ENCODE measurements at regions of chr6 and their contacts with region 1.

Region 1: DNA sequence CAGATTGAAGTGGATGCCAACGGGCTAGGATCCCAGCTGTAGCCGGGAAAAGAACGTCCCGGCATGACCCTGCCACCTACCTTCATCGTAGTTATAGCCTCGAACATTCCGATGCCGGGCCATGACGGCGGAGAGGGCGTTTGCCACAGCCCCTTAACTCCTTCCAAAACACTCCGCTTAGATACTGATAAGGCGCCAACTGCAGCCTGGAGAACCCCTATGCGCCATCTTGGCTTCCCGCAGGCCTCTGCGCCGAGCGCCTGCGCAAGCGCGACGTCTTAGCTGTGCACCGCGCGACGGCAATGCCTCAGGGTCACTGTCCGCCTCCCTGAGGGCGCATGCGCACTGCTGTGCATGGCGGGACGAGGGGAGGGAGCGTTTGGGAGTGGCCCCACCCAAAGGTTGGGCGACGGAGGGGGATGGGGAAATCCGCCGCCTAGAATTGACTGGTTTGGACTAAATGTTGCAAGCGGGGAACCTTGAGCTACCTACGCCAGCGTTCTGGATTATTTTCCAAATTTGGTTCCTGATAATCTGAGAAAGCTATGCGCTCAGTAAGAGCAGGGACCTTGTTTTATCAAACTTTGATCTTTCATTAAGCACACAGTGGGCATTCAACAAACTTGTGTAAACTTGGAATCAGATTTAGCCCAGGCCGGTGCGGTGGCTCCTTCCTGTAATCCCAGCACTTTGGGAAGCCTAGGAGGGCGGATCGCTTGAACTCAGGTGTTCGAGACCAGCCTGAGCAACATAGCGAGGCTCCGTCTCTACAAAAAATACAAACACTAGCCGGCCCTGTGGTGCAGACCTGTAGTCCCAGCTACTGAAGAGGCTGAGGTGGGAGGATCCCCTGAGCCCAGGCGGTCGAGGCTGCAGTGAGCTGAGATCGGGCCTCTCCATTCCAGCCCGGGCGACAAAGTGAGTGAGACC is at the start of gene HBS1L:
- DNase-seq: peak; percentile 99
- ATAC-seq: peak; percentile 96
- H3K4me3 Mint-ChIP-seq: peak within 1 kb of the TSS; percentile 94
- H3K27ac Mint-ChIP-seq: peak within 1 kb of the TSS; percentile 96
- H3K4me1 Mint-ChIP-seq: peaks cover 22% of the 10 kb centered on the region
- H3K27me3 Mint-ChIP-seq: no peaks in the 10 kb centered on the region
- total RNA-seq, gene HBS1L: 133 to 141 TPM

Region 2: GRCh38 chr6:135014353-135014832 is 40.4 kb before region 1 on chr6:
- CTCF ChIA-PET with region 1: no interaction called
- POLR2A ChIA-PET with region 1: interaction called, 3 read pairs
- intact Hi-C with region 1: loop called in 1 of 2 experiments (anchors 5 kb)
- DNase-seq: peak; percentile 23
- ATAC-seq: peak; percentile 87
- H3K4me3 Mint-ChIP-seq: peak overlapping the region; percentile 18
- H3K27ac Mint-ChIP-seq: peak overlapping the region; percentile 45
- H3K4me1 Mint-ChIP-seq: peaks cover 59% of the 10 kb centered on the region
- H3K27me3 Mint-ChIP-seq: no peaks in the 10 kb centered on the region

Region 3: GRCh38 chr6:135030056-135030473 is 24.8 kb before region 1 on chr6:
- CTCF ChIA-PET with region 1: interaction called, 3 read pairs
- POLR2A ChIA-PET with region 1: interaction called, 5 read pairs
- intact Hi-C with region 1: loop called in 1 of 2 experiments (anchors 1 kb)
- DNase-seq: no peak
- ATAC-seq: peak; percentile 97
- H3K4me3 Mint-ChIP-seq: peak overlapping the region; percentile 54
- H3K27ac Mint-ChIP-seq: peak overlapping the region; percentile 75
- H3K4me1 Mint-ChIP-seq: peaks cover 69% of the 10 kb centered on the region
- H3K27me3 Mint-ChIP-seq: no peaks in the 10 kb centered on the region

Region 4: DNA sequence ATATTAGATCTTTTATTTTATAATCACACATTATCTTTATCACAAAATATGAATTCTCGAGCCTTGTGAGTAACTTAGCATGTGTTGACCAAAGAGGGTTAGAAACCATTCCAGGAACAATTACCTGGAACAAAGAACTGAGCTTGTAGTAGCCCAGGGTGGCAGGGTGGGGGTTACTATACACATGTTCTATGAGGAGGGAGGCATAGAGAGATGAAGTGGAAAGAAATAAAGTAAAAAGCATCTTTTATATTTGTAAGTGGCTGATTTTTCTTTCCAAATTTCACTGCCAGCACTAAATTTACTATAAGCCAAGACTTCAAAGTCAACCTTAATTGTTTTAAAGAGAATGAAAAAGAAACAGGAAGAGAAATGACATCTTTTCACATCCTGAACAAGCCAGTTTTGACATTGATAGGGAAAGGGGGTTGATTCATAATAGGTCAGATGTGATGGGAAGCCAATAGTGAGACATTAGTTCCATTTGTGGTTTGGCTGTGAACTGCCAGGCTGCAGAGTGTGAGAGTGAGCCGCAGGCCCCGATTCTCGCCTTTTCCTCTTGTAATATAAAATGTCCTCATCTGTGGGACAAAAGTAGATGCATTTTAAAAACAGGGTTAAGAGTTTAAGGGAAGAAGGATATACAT is 73.6 kb after region 1 on chr6:
- CTCF ChIA-PET with region 1: interaction called, 4 read pairs
- POLR2A ChIA-PET with region 1: interaction called, 4 read pairs
- intact Hi-C with region 1: loop called (anchors 1 to 2 kb)
- DNase-seq: peak; percentile 83
- ATAC-seq: peak; percentile 97
- H3K4me3 Mint-ChIP-seq: peak overlapping the region; percentile 54
- H3K27ac Mint-ChIP-seq: peak overlapping the region; percentile 87
- H3K4me1 Mint-ChIP-seq: peaks cover 44% of the 10 kb centered on the region
- H3K27me3 Mint-ChIP-seq: no peaks in the 10 kb centered on the region

Region 5: GRCh38 chr6:136289579-136290409 is 1235.0 kb after region 1 on chr6 and contains the start of gene BCLAF1:
- CTCF ChIA-PET with region 1: no interaction called
- POLR2A ChIA-PET with region 1: no interaction called
- intact Hi-C with region 1: loop called in 1 of 2 experiments (anchors 1 kb)
- DNase-seq: peak; percentile 100
- ATAC-seq: peak; percentile 83
- H3K4me3 Mint-ChIP-seq: peak within 1 kb of the TSS; percentile 100
- H3K27ac Mint-ChIP-seq: peak within 1 kb of the TSS; percentile 100
- H3K4me1 Mint-ChIP-seq: peaks cover 37% of the 10 kb centered on the region
- H3K27me3 Mint-ChIP-seq: no peaks in the 10 kb centered on the region
- total RNA-seq, gene BCLAF1: 166 to 223 TPM

Region 6: GRCh38 chr6:136618086-136618485 is 1563.3 kb after region 1 on chr6:
- CTCF ChIA-PET with region 1: no interaction called
- POLR2A ChIA-PET with region 1: no interaction called
- intact Hi-C with region 1: no loop called
- DNase-seq: no peak
- ATAC-seq: no peak
- H3K4me3 Mint-ChIP-seq: no peak overlapping the region
- H3K27ac Mint-ChIP-seq: no peak overlapping the region
- H3K4me1 Mint-ChIP-seq: no peaks in the 10 kb centered on the region
- H3K27me3 Mint-ChIP-seq: no peaks in the 10 kb centered on the region

Measured in activated CD4-positive, alpha-beta T cell treated with anti-CD3 and anti-CD28 coated beads for 36 hours (primary cell).